Heart right ventricle (tissue), 16 donors: ENCODE measurements at regions of chr1 and their contacts with region 1.

Region 1: DNA sequence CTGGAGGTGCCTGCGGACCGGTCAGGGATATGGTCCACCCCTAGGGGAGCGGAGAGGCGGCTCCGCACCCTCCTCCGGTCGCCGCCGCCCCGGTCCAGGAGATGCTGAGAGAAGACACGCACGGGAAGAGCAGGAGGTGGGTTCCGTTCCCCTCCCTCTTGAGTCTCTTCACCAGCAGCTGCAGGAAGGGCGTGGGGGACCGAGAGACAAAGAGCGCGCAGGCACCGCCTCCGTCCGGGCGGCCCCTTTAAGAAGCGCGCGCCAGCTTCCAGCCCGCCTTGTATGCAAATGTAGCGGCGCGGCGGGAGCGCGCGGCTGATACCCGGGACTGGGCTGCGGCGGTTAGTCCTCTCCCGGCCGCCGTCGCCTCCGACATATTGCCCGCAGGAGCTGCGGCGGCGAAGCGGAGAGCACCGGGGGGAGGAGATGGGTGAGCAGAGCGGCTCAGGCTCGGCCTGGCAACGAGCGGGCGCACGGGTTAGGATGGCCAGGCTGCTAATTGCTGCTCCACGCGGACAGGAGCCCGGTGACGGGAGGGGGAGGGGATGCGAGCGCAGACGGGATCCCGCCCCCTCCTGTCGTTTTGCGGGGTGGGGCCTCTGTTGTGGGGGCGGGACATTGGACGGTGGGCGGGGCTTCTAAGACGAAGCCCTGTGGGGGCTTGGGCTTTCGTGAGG is at the start of gene TMEM39B:
- DNase-seq: peak; percentile 94 to 95
- ATAC-seq: peak; percentile 93 to 97 (median 96)
- H3K4me3 ChIP-seq: peak within 1 kb of the TSS; percentile 53 to 83 (median 67)
- H3K27ac ChIP-seq: peak within 1 kb of the TSS; percentile 82 to 95 (median 89)
- H3K4me1 ChIP-seq: peaks cover 3 to 58% (median 18%) of the 10 kb centered on the region in 9 donors
- H3K27me3 ChIP-seq: no peaks in the 10 kb centered on the region
- CTCF ChIP-seq: peak in 3 of 9 donors; percentile 9 to 32 (median 13)
- total RNA-seq, gene TMEM39B: 4.8 to 15.5 (median 6.5) TPM

Region 2: DNA sequence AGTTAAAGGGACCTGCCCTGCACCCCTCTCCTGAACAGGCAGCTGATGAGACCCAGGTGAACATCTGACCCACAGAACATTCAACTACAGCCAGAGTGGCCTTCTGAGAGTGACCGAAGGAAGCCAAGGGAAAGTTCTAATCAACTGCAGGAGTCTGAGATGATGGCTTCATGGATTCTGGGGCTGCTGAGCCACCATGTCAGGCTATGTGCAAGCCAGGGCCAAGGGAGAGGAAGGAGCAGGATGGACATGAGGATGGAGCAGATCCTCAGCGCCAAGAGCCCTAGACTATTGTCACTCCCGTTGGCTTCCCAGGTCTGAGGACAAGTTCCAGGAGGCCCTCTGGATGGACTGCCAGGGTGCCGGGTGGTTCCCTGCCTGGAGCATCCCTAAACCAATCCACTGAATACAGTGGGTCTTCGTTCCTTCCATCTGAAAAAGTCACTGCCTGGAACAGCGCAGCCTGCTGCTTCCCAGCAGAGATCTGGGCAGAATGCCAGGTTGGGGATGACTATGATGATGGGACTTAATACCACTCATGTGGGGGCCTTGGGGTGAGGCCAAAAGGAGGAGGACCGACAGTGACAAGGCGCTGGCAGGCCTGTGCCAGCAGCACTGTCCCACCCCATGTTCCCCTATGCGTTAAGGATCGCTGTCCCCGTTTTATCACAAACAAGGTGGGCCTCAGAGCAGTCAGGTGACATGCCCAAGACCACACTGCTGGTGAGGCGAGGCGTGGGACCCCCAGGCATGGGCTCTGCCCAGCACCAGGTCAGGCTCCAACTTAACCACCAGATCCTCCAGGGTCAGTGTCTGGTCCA is 276.7 kb before region 1 on chr1:
- intact Hi-C with region 1: no loop called
- DNase-seq: no peak
- ATAC-seq: peak in 3 of 8 donors; percentile 37 to 45 (median 42)
- H3K4me3 ChIP-seq: no peak overlapping the region
- H3K27ac ChIP-seq: no peak overlapping the region
- H3K4me1 ChIP-seq: peaks cover 0 to 14% (median 0%) of the 10 kb centered on the region in 9 donors
- H3K27me3 ChIP-seq: peaks cover 0 to 36% (median 29%) of the 10 kb centered on the region in 7 donors
- CTCF ChIP-seq: no peak

Region 3: DNA sequence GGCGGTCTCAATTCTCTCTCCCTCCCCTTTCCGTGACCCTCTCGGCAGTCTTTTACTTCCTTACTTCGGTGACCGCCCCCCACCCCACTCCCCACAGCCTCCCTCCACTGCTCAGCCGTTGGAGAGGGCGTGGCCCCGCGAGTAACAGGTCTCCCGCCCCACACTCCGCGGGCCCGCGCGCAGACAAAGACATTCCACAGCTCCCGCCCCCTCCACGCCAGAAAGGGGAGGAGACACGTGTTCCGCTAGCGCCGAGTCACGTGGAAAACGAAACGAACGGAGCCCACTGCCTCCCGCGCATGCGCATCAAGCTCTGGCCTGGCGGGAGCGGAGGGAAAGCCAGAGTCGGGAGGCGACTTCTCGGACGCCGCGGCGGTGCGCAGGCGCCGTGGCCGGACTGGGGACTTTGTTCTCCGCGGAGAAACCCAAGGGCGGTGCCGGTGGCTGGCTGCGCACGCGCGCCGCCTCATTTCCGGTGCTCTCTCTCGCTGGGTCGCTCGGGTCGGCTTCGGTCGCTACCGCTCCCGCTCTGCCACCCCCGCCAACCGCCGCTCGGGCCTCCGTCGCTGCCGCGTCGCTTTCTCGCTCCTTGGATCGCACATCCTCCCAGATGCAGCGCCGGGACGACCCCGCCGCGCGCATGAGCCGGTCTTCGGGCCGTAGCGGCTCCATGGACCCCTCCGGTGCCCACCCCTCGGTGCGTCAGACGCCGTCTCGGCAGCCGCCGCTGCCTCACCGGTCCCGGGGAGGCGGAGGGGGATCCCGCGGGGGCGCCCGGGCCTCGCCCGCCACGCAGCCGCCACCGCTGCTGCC is 59.2 kb before region 1 on chr1 and contains the start of gene KHDRBS1:
- intact Hi-C with region 1: loop called in 3 of 10 experiments (anchors 5 to 10 kb)
- DNase-seq: peak; percentile 99
- ATAC-seq: peak; percentile 95 to 98 (median 96)
- H3K4me3 ChIP-seq: peak within 1 kb of the TSS; percentile 76 to 100 (median 96)
- H3K27ac ChIP-seq: peak within 1 kb of the TSS; percentile 93 to 100 (median 100)
- H3K4me1 ChIP-seq: peaks cover 0 to 50% (median 45%) of the 10 kb centered on the region in 9 donors
- H3K27me3 ChIP-seq: no peaks in the 10 kb centered on the region
- CTCF ChIP-seq: no peak
- total RNA-seq, gene KHDRBS1: 64.6 to 78.3 (median 67.1) TPM

Region 4: DNA sequence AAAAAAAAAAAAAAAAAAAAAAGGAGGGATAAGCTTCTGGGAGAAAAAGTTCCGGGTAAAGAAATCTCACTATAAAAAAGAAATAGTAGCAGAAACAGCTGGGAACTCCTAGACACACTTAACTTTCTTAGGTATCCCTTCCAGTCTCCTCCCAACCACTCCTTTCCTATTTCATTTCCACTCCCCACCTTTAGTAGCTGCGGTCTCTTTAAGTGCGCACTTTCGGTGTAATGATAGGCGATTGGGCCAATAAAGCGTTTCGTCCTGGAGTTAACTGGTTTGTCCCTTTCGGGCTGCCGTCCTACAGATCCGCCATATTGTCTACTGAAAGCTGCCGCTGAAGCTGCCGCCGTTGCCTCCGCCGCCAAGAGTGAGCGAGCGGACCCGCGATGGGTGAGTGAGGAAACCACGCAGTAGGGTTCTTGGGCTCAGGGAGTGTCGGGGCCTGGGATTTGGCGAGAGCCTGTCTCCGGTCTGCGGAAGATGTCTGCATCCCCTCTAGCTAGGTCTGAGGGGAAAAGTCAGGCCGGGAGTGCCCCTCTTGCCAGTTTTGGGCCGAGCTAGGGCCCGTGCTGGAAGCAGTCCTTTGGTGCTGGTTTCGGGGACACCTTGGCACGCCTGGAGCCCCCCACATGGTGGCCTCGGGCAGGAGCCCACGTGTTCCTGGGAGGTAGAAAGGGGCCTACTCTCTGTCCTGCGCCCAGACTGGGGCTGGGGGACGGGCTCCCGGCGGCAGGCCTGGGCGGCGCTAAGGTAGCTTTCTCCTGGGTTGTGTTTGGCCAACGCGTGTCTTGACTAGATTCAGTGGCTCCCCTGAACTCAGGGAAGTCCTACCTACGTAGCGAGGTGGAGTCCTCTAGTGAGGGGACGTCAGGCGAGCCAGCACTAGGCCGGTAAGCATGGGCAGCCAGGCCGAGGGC is 35.2 kb after region 1 on chr1 and contains the start of gene KPNA6:
- intact Hi-C with region 1: loop called in 3 of 10 experiments (anchors 2 to 5 kb)
- DNase-seq: peak; percentile 83 to 96
- ATAC-seq: peak; percentile 89 to 96 (median 92)
- H3K4me3 ChIP-seq: peak within 1 kb of the TSS; percentile 71 to 99 (median 96)
- H3K27ac ChIP-seq: peak within 1 kb of the TSS; percentile 68 to 96 (median 92)
- H3K4me1 ChIP-seq: peaks cover 3 to 53% (median 44%) of the 10 kb centered on the region in 9 donors
- H3K27me3 ChIP-seq: no peaks in the 10 kb centered on the region
- CTCF ChIP-seq: no peak
- total RNA-seq, gene KPNA6: 73.0 to 92.5 (median 82.6) TPM

Region 5: GRCh38 chr1:32205401-32206370 is 132.9 kb after region 1 on chr1 and contains the start of gene IQCC:
- intact Hi-C with region 1: no loop called
- DNase-seq: peak; percentile 84 to 88
- ATAC-seq: peak; percentile 71 to 84 (median 79)
- H3K4me3 ChIP-seq: peak within 1 kb of the TSS; percentile 53 to 76 (median 72)
- H3K27ac ChIP-seq: peak within 1 kb of the TSS in 8 of 10 donors; percentile 2 to 81 (median 49)
- H3K4me1 ChIP-seq: peaks cover 8 to 41% (median 32%) of the 10 kb centered on the region in 9 donors
- H3K27me3 ChIP-seq: no peaks in the 10 kb centered on the region
- CTCF ChIP-seq: no peak
- total RNA-seq, gene IQCC: 0.34 to 1.2 (median 0.90) TPM